Common myeloid progenitor, CD34-positive (primary cell): ENCODE measurements at regions of chr14 and their contacts with region 1.

Region 1: DNA sequence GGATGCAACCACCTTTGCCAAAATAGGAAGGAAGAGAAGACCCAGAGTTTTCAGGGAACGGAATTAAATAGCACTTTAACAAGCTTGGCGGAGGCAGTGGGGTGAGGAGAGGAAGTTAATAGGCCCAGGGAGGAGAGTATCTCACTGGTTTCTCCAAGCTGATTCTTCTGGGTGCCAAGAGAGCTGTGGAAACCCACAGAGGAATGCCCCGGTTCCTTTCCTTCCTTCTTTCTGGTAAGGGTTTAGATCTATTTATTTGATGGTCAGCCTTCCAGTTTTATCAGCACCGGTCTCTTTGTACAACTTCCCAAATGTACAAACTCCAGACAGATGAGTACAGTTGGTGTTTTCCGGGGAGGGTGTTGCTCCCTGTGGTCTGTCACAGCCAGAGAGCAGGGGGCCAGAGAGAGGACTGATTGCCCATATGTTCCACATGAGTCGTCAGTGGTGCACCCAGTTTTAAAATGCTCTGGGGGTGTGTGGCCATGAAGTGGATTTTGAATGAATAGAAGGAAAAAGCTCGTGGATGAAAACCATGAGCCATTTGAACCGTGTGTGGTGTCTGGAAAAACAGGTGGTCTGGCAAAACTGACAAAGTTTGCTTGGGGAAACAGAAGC is 26.6 kb downstream of the PRKCH start:
- DNase-seq: peak; percentile 25 to 69 (median 59)
- H3K4me3 ChIP-seq: peak overlapping the region in 4 of 7 experiments; percentile 5 to 43 (median 11)
- H3K27ac ChIP-seq: peak overlapping the region in 1 of 2 experiments; percentile 31
- H3K4me1 ChIP-seq: peaks cover 19 to 68% (median 51%) of the 10 kb centered on the region in 4 experiments
- H3K27me3 ChIP-seq: no peaks in the 10 kb centered on the region

Region 2: GRCh38 chr14:61330511-61330910 is 17.4 kb before region 1 on chr14:
- CTCF ChIA-PET with region 1: interaction called, 18 read pairs
- POLR2A ChIA-PET with region 1: interaction called, 3 read pairs
- DNase-seq: no peak
- H3K4me3 ChIP-seq: no peak overlapping the region
- H3K27ac ChIP-seq: no peak overlapping the region
- H3K4me1 ChIP-seq: peaks cover 2 to 55% (median 14%) of the 10 kb centered on the region in 4 experiments
- H3K27me3 ChIP-seq: no peaks in the 10 kb centered on the region

Region 3: DNA sequence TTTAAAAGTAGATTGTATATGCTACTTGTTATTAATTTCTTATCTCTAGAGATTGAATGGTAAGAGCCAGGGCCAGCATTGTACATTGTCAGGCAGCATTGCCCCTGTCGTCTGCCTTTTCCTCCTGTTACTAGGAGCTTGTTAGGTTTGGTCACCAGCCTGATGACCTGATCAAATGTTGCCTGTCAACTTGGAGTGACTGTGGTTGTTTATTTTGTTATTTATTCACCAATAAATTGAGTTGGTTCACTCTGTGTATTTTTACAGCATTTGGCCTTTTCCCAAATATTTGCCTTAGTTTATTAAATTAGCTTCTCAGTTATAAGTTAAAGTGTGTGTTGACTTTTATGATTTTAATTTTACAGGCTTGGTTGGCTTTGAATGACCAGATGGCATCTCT is 61.8 kb after region 1 on chr14:
- CTCF ChIA-PET with region 1: no interaction called
- POLR2A ChIA-PET with region 1: no interaction called
- DNase-seq: no peak
- H3K4me3 ChIP-seq: no peak overlapping the region
- H3K27ac ChIP-seq: no peak overlapping the region
- H3K4me1 ChIP-seq: peaks cover 0 to 14% (median 5%) of the 10 kb centered on the region in 4 experiments
- H3K27me3 ChIP-seq: no peaks in the 10 kb centered on the region

Region 4: GRCh38 chr14:61430066-61430739 is 82.3 kb after region 1 on chr14:
- CTCF ChIA-PET with region 1: no interaction called
- POLR2A ChIA-PET with region 1: no interaction called
- DNase-seq: no peak
- H3K4me3 ChIP-seq: no peak overlapping the region
- H3K27ac ChIP-seq: no peak overlapping the region
- H3K4me1 ChIP-seq: peaks cover 6 to 16% (median 12%) of the 10 kb centered on the region in 4 experiments
- H3K27me3 ChIP-seq: no peaks in the 10 kb centered on the region